Mammary epithelial cell (primary cell): ENCODE measurements at regions of chr2 and their contacts with region 1.

Region 1: DNA sequence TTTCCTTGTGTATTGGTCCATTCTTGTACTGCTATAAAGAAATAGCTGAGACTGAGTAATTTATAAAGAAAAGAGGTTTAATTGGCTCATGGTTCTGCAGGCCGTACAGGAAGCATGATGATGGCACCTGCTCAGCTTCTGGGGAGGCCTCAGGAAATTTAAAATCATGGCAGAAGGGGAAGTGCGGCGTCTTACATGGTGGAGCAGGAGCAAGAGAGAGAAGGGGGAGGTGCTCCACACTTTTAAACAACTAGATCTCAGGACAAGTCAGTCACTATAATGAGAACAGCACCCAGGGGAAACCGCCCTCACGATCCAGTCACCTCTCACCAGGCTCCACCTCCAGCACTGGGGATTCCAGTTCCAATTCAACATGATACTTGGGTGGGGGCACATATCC is 54.3 kb downstream of the MSH2 start:
- DNase-seq: no peak
- H3K4me3 ChIP-seq: no peak overlapping the region
- H3K27ac ChIP-seq: no peak overlapping the region
- H3K4me1 ChIP-seq: no peaks in the 10 kb centered on the region
- H3K27me3 ChIP-seq: no peaks in the 10 kb centered on the region
- CTCF ChIP-seq: no peak

Region 2: DNA sequence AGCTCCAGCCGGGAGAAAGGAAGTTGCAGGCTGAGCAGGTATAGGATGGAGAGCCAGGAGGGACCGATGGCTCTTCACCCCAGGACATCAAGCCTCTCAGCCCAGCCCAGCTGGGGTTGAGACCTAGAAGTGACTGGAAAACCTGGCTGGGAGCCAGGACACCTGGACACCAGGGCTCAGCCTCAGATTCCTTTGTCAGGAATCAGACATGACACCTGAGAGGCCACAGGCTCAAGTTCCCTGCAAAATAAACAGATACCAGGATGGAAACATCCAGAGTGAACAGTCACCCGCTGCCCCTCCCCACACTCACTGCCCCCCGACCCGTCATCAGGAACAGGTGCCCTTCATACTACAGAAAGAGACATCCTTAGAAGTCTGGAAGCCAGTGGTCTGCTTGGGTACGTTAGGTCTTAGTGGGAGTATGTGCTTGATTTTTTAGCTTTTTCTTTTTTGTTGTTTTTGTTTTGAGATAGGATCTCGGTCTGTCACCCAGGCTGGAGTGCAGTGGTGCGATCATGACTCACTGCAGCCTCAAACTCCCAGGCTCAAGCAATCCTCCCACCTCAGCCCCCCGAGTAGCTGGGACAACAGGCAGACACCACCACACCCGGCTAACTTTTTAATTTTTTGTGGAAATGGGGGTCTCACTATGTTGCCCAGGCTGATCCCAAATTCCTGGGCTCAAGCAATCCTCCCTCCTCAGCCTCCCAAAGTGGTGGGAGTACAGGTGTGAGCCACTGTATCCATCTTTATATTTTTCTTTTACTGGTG is 206.5 kb before region 1 on chr2:
- CTCF ChIA-PET with region 1: no interaction called
- dilution Hi-C with region 1: no loop called
- in situ Hi-C with region 1: no loop called
- intact Hi-C with region 1: no loop called
- DNase-seq: peak; percentile 63
- H3K4me3 ChIP-seq: no peak overlapping the region
- H3K27ac ChIP-seq: no peak overlapping the region
- H3K4me1 ChIP-seq: no peaks in the 10 kb centered on the region
- H3K27me3 ChIP-seq: no peaks in the 10 kb centered on the region
- CTCF ChIP-seq: no peak

Region 3: DNA sequence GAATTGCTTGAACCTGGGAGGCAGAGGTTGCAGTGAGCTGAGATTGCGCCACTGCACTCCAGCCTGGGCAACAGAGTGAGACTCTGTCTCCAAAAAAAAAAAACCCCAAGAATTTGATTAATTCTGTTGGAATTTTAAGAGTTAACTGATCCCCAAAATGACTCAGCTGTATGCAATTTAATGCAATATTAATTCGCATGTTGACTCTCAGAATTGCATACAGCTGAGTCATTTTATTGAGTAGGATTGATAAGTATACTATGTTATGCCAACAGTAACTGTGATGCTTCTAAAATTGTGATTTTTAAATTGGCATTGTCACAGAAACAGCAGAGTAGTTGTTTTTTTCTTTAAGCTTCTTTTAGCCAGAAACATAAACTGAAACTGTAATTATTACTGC is 34.7 kb before region 1 on chr2:
- CTCF ChIA-PET with region 1: no interaction called
- dilution Hi-C with region 1: loop called (anchors 5 kb)
- in situ Hi-C with region 1: no loop called
- intact Hi-C with region 1: no loop called
- DNase-seq: peak; percentile 44
- H3K4me3 ChIP-seq: no peak overlapping the region
- H3K27ac ChIP-seq: peak overlapping the region; percentile 77
- H3K4me1 ChIP-seq: peaks cover 3% of the 10 kb centered on the region
- H3K27me3 ChIP-seq: no peaks in the 10 kb centered on the region
- CTCF ChIP-seq: no peak

Region 4: DNA sequence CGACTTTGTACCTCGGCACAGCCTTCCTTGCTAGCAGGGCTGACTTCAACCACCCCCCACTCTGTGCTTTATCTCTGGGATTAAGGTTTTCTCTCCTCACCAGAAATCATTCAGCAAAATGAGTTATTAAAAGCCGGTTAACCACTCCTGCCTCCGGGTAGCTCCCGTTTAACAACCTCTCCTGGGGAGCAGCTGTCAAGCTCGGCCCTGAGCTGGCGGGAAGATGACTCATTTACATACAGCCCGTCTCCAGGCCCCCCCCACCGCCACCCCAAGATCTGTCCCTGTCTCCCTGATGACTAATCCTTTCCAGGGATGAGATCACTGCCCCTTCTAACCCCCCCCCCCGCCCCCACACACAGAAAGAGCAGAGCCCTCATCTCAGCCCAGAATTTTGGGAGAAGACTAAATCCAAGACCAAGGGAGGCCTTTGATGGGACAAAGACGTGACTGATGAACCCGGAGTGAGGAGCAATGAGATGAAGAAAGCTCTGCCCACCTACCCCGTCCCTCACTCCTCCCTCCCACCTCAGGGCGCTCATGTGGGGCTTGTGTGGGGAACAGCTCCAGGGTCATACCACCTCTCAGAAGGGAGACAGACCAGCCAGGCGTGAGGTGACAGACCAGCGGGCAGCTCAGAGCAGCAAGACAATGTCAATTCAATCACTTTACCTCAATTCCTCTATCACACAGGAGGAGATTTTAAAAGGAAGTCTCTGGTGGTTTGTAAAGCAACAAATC is 77.1 kb after region 1 on chr2:
- CTCF ChIA-PET with region 1: no interaction called
- dilution Hi-C with region 1: no loop called
- in situ Hi-C with region 1: no loop called
- intact Hi-C with region 1: no loop called
- DNase-seq: peak; percentile 74
- H3K4me3 ChIP-seq: no peak overlapping the region
- H3K27ac ChIP-seq: no peak overlapping the region
- H3K4me1 ChIP-seq: peaks cover 5% of the 10 kb centered on the region
- H3K27me3 ChIP-seq: no peaks in the 10 kb centered on the region
- CTCF ChIP-seq: no peak

Region 5: DNA sequence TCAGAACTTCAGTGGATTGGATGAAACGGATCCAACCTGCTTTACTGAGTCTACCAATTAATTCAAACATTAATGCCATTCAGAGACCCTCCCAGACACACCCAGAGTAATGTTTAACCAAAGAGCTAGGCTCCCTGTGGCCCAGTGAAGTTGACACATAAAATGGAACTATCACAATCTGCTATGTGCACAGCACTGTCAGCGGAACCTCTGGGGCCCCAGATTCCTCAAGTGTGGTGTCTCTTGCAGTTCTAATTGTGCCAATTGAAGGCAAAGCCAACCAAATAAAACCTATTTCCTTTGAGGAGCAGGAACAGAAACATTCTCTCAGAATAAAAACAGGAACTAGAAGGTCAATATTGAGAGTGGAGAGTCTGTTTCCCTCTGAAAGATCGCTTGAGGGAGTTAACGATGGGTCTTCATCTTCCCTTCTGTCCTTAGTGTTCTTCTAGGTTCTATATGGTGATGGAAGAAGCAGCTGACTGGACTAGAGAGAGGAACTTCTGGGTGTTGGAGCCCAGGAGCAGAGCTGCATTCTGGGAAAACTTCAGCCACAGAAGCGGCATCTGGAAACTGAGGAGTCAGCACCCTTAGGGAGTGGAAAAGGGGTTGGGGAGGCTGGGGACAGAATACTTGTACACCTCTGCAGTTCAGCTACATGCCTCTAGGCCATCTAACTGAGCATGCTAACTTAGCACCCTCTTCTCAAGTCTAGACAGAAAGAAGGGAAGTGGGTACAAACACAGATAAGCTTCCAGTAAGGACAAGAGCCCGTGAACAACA is 623.5 kb after region 1 on chr2:
- CTCF ChIA-PET with region 1: no interaction called
- dilution Hi-C with region 1: no loop called
- in situ Hi-C with region 1: loop called in 1 of 2 experiments (anchors 25 kb)
- intact Hi-C with region 1: no loop called
- DNase-seq: no peak
- H3K4me3 ChIP-seq: no peak overlapping the region
- H3K27ac ChIP-seq: no peak overlapping the region
- H3K4me1 ChIP-seq: no peaks in the 10 kb centered on the region
- H3K27me3 ChIP-seq: no peaks in the 10 kb centered on the region
- CTCF ChIP-seq: no peak